ENCODE measurements at regions of chr12 and their contacts with region 1.

Region 1: GRCh38 chr12:107607464-107608392 is 77.9 kb upstream of the PWP1 start:
- DNase-seq: peak; percentile 84
- H3K4me3 Mint-ChIP-seq: no peak overlapping the region
- H3K27ac Mint-ChIP-seq: no peak overlapping the region
- H3K4me1 Mint-ChIP-seq: no peaks in the 10 kb centered on the region
- H3K27me3 Mint-ChIP-seq: no peaks in the 10 kb centered on the region

Region 2: DNA sequence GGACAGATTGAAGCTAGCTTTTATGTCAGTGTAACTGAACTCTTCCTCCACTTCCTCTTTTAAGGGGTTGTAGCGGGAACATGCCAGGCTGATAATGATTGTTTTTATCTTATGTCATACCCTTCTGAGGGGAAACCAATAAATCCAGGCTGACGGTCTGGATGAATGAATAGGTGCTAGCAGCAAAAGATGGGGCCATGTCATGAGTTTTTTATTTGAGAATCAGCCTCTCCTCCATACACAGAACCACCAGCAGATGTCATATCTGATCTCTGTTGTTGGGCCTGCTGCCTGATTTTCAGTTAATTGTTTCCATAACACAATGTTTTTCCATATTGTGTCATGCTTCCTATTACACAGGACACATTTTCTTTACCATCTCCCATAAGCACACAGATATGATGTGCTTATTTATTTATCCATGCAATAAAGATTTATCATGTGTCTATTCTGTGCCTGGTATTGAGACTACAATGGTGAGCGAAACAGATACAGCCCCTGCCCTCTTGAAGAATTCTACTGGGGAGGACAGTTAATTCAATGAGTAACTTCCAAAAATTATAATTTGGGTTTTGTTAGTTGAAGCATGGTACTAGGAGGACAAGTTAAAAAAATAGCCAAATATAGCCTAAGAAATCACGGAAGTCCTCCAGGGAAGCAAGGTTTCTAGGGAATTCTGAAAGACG is 480.8 kb before region 1 on chr12:
- CTCF ChIA-PET with region 1: interaction called, 341 read pairs
- POLR2A ChIA-PET with region 1: no interaction called
- intact Hi-C with region 1: loop called (anchors 1 kb)
- DNase-seq: no peak
- H3K4me3 Mint-ChIP-seq: no peak overlapping the region
- H3K27ac Mint-ChIP-seq: no peak overlapping the region
- H3K4me1 Mint-ChIP-seq: no peaks in the 10 kb centered on the region
- H3K27me3 Mint-ChIP-seq: peaks cover 11% of the 10 kb centered on the region

Region 3: DNA sequence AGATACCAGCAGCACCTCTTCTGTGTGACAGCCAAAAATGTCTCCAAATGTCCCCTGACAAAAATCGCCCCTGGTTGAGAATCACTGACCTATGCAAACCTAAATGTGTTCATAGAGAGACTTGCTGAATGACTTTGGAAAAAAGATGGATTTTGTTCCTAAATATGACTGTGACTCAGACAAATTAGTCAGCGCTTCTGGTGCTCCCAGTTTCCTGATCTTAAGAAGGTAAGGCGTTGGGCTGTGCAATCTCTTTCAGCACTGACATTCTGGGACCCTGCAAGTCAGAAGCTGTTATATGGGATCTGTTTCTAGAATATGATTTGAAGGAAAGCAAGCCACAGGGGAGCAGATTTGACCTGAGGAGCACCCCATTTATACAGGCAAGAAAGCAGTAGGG is 12.7 kb before region 1 on chr12:
- CTCF ChIA-PET with region 1: interaction called, 28 read pairs
- POLR2A ChIA-PET with region 1: no interaction called
- intact Hi-C with region 1: no loop called
- DNase-seq: no peak
- H3K4me3 Mint-ChIP-seq: no peak overlapping the region
- H3K27ac Mint-ChIP-seq: no peak overlapping the region
- H3K4me1 Mint-ChIP-seq: no peaks in the 10 kb centered on the region
- H3K27me3 Mint-ChIP-seq: no peaks in the 10 kb centered on the region

Region 4: GRCh38 chr12:107622005-107622404 is 14.3 kb after region 1 on chr12:
- CTCF ChIA-PET with region 1: interaction called, 20 read pairs
- POLR2A ChIA-PET with region 1: no interaction called
- intact Hi-C with region 1: no loop called
- DNase-seq: no peak
- H3K4me3 Mint-ChIP-seq: no peak overlapping the region
- H3K27ac Mint-ChIP-seq: no peak overlapping the region
- H3K4me1 Mint-ChIP-seq: no peaks in the 10 kb centered on the region
- H3K27me3 Mint-ChIP-seq: no peaks in the 10 kb centered on the region